ENCODE measurements at regions of chr14 and their contacts with region 1.

Region 1: GRCh38 chr14:77616454-77617229 is at the start of gene SPTLC2:
- DNase-seq: peak; percentile 96
- H3K4me3 Mint-ChIP-seq: peak within 1 kb of the TSS; percentile 90
- H3K27ac Mint-ChIP-seq: peak within 1 kb of the TSS; percentile 79
- H3K4me1 Mint-ChIP-seq: peaks cover 32% of the 10 kb centered on the region
- H3K27me3 Mint-ChIP-seq: no peaks in the 10 kb centered on the region
- total RNA-seq, gene SPTLC2: 16.1 to 18.1 TPM

Region 2: DNA sequence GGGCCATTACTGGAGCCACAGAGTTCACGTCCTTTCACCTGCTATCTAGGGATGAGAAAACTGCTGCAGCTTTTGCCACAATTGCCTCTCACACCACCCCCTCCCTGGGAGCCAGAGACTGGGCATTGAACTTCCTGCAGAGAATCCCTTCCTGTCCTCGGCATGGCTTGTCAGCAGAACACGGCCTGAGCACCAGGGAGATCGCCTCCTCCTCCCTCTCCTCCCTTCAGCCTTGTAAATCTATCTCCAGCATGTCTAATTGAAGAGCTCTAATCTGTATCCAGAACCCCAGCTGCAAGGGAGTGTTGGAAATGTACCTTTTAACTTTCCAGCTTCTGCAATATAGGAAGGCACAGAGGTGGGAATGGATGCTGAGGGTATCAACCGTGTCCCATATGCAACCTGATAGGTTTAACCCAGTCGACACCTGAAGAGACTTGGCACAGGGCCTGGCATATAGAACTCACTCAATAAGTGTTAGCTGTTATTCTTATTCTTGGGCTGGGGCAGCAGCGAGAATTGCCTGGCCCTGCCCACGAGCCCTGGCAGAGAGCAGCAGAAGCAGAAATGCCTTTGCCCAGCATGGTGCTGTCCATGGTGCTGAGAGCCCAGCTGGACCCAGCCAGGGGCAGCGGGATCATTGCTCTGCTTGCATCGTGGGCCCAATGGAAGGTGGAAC is 408.2 kb before region 1 on chr14:
- CTCF ChIA-PET with region 1: no interaction called
- intact Hi-C with region 1: no loop called
- DNase-seq: peak; percentile 71
- H3K4me3 Mint-ChIP-seq: no peak overlapping the region
- H3K27ac Mint-ChIP-seq: no peak overlapping the region
- H3K4me1 Mint-ChIP-seq: no peaks in the 10 kb centered on the region
- H3K27me3 Mint-ChIP-seq: peaks cover under 1% of the 10 kb centered on the region

Region 3: GRCh38 chr14:77376771-77377501 is 239.7 kb before region 1 on chr14 and contains the starts of genes SAMD15 and TMED8:
- CTCF ChIA-PET with region 1: no interaction called
- intact Hi-C with region 1: loop called (anchors 1 kb)
- DNase-seq: peak; percentile 84
- H3K4me3 Mint-ChIP-seq: peak within 1 kb of the TSS; percentile 90
- H3K27ac Mint-ChIP-seq: peak within 1 kb of the TSS; percentile 80
- H3K4me1 Mint-ChIP-seq: peaks cover 38% of the 10 kb centered on the region
- H3K27me3 Mint-ChIP-seq: no peaks in the 10 kb centered on the region
- total RNA-seq, gene SAMD15: 0.10 TPM in 1 of 2 experiments, not detected in the other
- total RNA-seq, gene TMED8: 21.5 to 21.7 TPM

Region 4: DNA sequence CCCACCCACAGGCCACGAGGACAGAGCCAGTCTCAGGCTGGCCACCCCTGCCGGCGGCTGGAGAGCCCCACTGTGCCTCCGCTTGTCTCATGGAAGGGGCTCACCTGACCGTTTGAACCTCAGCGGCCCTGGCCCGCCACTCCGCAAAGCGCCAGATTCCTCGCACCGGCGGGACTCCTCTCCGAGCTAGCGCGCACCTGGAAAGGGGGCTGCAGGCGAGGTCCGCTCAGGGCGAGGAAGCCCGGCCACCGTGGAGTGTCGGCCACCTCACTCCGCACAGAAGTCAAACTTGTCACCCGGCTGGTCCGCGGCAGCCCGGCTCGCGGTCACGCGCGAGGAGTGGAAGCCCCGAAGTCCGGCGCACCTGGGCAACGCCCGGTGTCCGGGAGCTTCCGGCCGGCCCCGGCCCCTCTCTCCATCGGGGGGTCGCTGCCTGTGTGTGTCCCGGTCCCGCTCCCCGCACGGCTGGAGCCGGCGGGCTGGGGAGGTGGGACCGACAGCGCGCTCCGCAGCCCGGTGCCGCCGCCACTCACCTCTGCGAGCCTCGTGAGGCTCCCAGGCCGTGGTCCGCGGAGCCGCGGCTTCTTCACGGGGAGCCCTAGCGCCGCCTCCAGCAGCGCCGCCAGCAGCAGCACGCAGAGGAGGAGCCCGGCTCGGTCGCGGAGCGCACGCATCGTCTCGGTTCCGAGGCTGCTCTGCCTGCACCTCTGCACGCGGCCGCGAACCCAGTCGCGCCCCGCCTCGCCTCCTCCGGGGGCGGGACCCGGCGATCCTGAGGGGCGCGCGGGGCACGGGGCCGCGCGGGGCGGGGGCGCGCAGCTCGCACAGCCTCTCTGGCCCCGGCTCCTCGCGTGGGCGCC is 118.3 kb before region 1 on chr14 and contains the start of gene ISM2:
- CTCF ChIA-PET with region 1: no interaction called
- intact Hi-C with region 1: no loop called
- DNase-seq: peak; percentile 43
- H3K4me3 Mint-ChIP-seq: peak within 1 kb of the TSS; percentile 52
- H3K27ac Mint-ChIP-seq: no peak within 1 kb of the TSS
- H3K4me1 Mint-ChIP-seq: peaks cover 4% of the 10 kb centered on the region
- H3K27me3 Mint-ChIP-seq: peaks cover 36% of the 10 kb centered on the region
- total RNA-seq, gene ISM2: not detected

Region 5: DNA sequence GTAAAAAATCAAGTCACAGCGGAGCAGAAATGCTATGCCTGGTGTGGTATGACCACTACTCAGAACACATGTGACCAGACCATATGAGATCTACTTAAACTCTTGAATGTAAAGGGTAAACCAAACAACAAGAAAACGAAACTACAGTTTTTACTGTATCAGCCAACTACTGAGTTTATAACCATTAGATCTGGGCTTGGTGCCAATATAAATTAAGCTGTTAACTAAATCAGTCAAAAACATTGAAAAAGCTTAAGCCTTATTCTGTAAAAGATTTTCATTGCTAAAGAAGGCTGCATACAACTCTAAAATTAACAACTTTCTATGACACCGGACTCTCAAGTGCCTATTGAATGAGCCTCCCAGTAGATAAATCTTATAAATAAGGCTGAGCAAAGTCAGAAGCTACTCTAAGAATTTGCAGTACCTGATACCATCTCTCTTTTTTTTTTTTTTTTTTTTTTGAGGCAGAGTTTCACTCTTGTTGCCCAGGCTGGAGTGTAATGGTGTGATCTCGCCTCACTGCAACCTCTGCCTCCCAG is 35.6 kb before region 1 on chr14:
- CTCF ChIA-PET with region 1: interaction called, 3 read pairs
- intact Hi-C with region 1: loop called (anchors 5 kb)
- DNase-seq: peak; percentile 10
- H3K4me3 Mint-ChIP-seq: no peak overlapping the region
- H3K27ac Mint-ChIP-seq: no peak overlapping the region
- H3K4me1 Mint-ChIP-seq: peaks cover 22% of the 10 kb centered on the region
- H3K27me3 Mint-ChIP-seq: no peaks in the 10 kb centered on the region

Region 6: DNA sequence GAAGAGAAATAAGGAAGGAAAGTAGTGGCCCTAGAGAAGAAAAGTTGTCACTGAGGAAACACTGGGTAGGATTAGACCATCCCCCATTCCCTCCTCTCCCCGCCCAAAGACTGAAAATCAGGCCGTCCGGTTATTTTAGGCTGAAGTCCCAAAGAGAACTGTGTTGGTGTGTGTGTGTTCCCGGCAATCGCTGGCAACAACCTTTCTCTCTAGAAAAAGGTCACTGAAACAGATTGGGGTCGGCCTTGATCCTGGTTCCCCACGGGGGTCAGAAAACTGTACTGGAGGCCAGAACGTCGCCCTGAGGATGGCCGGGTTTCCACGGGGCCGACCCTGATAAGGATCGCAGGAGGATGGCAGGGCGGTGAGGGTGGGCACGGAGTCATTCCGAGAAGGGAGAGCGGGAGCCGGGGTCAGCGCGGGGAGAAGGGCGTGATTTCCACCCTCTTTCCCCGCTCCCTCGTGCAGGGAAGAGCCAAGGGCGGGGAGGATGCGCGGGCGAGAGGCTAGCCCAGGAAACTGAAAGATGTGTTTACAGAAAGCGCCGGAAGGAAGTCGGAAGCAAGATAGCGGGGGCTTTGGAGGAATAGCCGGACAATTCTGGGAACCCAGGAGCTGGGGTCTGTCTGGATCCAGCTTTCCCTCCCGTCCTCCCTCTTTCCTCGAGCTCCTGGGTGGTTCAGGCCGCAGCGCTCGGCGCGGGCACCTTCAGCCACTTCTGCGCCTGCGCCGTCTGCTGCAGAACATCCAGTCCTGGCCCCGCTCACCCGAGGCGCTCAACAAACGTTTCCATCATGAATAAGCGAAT is 25.1 kb after region 1 on chr14:
- CTCF ChIA-PET with region 1: interaction called, 4 read pairs
- intact Hi-C with region 1: loop called (anchors 2 kb)
- DNase-seq: peak; percentile 79
- H3K4me3 Mint-ChIP-seq: peak overlapping the region; percentile 84
- H3K27ac Mint-ChIP-seq: peak overlapping the region; percentile 84
- H3K4me1 Mint-ChIP-seq: peaks cover 17% of the 10 kb centered on the region
- H3K27me3 Mint-ChIP-seq: no peaks in the 10 kb centered on the region

Region 7: DNA sequence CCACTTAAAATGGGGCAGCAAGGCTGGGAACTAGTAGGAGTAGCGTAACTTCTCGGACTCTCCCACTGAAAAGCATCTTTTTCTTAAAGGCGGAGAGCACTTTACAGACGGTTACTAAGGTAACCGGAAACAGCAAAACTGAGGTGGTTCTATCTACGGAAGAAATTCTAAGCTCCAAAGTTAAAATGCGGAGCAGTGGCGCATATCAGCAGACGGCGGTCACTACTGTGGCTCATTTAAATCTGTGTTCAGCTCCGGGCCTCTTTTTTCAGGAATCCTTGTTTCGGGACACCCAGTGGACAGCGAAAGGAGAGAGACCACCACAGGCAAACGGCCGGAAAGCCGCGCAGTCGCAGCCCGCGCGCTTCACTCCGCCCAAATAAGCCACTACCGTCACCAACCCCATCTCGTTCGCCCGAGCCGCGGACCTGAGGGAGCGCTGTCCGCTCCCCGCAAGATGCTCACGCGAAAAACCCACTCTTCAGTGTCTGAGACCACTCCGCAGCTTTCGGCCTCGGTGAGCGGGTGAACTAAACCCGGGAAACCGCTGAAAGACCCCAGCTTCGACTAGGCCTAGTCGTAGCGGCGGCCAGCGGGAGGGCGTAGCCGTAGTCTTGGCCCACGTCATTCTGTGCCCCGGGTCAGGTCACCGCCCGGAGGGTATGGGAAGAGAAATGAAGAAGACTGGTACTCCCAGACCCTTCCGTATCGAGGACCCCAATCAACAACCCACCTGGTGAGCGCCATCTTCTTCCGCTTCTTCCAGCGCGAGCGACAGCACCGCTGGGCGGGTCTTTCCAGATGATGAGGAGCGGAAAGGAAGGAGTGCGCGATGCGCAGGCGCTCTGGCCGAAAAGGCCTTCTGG is 144.0 kb after region 1 on chr14 and contains the start of gene SNW1:
- CTCF ChIA-PET with region 1: no interaction called
- intact Hi-C with region 1: loop called (anchors 2 kb)
- DNase-seq: peak; percentile 95
- H3K4me3 Mint-ChIP-seq: peak within 1 kb of the TSS; percentile 94
- H3K27ac Mint-ChIP-seq: peak within 1 kb of the TSS; percentile 95
- H3K4me1 Mint-ChIP-seq: peaks cover 32% of the 10 kb centered on the region
- H3K27me3 Mint-ChIP-seq: no peaks in the 10 kb centered on the region
- total RNA-seq, gene SNW1: 117 to 129 TPM